Activated naive CD4-positive, alpha-beta T cell treated with anti-CD3 and anti-CD28 coated beads for 36 hours (primary cell): ENCODE measurements at regions of chr7 and their contacts with region 1.

Region 1: DNA sequence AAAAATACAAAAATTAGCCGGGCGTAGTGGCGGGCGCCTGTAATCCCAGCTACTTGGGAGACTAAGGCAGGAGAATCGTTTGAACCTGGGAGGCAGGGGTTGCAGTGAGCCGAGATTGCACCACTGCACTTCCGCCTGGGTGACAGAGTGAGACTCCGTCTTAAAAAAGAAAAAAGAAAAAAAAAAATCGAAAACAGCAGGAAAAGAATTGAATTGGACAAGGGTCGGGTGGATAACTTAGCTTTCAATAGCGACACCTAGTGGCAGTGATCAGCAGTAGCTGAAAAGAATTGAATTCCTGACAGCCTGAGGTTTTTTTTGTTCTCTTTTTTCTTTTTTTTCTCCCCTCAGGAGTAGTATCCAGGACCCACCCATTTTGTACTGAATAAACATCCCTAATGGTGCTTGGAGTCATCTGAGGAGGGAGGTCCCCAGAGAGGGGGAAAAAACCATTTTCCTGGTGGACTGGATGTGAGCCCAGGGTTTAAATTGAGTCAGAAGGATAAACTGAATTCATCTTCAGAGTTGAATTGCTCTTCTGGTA is 55.1 kb downstream of the CYCS start:
- DNase-seq: peak; percentile 57
- H3K4me3 Mint-ChIP-seq: no peak overlapping the region
- H3K27ac Mint-ChIP-seq: no peak overlapping the region
- H3K4me1 Mint-ChIP-seq: peaks cover 6% of the 10 kb centered on the region
- H3K27me3 Mint-ChIP-seq: no peaks in the 10 kb centered on the region

Region 2: DNA sequence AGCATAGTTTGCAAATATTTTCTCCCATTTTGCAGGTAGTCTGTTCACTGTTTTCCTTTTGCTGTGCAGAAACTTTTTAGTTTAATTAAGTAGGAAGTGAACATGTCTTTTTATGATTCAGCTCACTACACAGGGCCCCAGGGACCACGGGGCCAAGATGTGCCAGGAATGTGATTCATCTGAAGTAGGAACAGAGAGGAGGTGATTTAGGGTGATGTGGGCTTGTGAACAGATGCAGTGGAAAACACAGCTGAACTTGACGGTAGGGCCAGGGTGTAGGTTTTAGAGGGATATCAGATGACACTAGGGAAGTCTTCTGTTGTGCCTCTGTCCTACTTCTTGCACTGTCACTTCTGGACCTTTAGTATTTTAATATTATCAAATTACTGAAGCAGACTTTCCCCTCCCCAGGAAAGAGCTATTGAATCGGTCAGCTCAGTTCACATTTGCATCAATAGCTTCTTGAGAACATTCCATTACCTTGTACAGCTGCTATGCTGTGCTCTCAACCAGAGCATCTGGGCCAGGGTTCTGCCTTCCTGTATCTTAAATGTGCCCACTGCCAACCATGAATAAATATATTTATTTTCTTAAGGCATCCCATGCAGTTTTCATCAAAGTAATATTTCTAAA is 186.9 kb before region 1 on chr7:
- CTCF ChIA-PET with region 1: no interaction called
- intact Hi-C with region 1: loop called (anchors 5 kb)
- DNase-seq: peak; percentile 68
- H3K4me3 Mint-ChIP-seq: no peak overlapping the region
- H3K27ac Mint-ChIP-seq: no peak overlapping the region
- H3K4me1 Mint-ChIP-seq: peaks cover 75% of the 10 kb centered on the region
- H3K27me3 Mint-ChIP-seq: no peaks in the 10 kb centered on the region

Region 3: DNA sequence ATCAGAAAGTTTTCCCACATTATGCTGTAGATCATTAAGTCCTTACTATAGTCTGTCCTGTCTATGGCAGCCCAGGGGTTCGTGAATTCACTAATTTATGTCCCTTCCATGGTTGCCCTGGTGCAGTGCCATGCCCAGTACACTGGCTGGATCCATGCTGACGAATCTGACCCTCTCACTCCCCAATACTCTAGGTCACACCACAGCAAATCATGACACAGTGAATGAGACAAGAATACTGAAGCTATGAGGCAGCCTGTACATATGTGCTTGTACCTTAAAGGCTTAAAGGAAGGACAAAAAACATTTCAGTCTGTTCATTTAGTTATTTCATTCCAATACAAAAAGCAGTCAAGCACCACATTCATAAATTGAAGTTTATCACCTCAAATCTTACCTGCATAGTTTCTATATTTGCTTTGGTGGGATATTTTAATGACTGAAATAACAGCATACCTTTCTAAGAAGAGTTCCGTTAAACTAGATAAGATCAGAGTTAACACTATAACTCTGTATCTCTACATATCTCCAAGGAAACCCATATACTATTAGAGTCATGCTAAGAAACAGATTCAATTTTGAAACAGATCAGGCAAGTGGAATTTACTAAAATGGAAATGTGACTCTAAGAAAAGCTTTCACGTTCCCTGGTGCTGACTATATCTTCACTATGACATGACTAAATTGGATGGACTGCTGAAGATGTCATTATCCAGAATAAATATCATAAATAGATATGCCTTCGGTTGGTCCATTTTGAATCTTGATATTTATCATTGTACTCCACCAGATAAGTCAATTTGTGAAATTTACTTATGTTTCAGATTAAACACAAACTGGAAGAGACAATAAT is 126.7 kb before region 1 on chr7:
- CTCF ChIA-PET with region 1: no interaction called
- intact Hi-C with region 1: no loop called
- DNase-seq: no peak
- H3K4me3 Mint-ChIP-seq: no peak overlapping the region
- H3K27ac Mint-ChIP-seq: no peak overlapping the region
- H3K4me1 Mint-ChIP-seq: peaks cover 26% of the 10 kb centered on the region
- H3K27me3 Mint-ChIP-seq: no peaks in the 10 kb centered on the region

Region 4: GRCh38 chr7:24991353-24991752 is 78.6 kb before region 1 on chr7:
- CTCF ChIA-PET with region 1: interaction called, 12 read pairs
- intact Hi-C with region 1: no loop called
- DNase-seq: no peak
- H3K4me3 Mint-ChIP-seq: no peak overlapping the region
- H3K27ac Mint-ChIP-seq: no peak overlapping the region
- H3K4me1 Mint-ChIP-seq: no peaks in the 10 kb centered on the region
- H3K27me3 Mint-ChIP-seq: no peaks in the 10 kb centered on the region

Region 5: DNA sequence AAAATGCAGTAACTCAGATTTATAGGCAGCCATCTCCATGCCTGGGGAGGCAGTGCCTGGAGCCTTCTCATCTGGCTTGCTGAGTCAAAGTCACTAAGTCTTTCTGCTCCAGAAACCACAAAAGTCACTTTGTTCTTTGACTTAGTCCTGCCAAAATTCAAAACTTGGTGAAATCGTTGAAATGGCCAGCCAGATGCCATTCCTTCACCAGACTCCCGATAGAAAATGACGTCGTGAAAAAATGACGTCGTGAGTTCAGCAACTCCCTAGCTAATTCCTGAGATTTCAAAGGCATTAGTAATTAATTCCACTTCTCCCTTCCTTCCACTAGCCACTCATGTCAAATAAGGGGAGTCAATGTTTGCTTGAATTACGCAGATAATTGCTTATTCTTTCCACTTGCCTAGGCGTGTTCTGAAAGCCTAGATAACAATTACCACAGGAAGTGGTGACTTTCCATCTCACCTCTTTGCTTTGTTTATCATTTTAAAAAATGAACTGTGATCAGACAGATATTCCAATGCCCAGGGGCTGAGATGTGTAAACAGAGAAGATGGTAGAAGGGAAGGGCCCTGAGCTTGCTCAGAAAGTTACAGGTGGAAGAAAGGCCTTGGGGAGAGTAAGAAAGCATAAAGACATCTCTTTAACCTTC is 41.5 kb before region 1 on chr7:
- CTCF ChIA-PET with region 1: interaction called, 9 read pairs
- intact Hi-C with region 1: loop called (anchors 2 kb)
- DNase-seq: peak; percentile 38
- H3K4me3 Mint-ChIP-seq: no peak overlapping the region
- H3K27ac Mint-ChIP-seq: peak overlapping the region; percentile 79
- H3K4me1 Mint-ChIP-seq: peaks cover 37% of the 10 kb centered on the region
- H3K27me3 Mint-ChIP-seq: no peaks in the 10 kb centered on the region

Region 6: DNA sequence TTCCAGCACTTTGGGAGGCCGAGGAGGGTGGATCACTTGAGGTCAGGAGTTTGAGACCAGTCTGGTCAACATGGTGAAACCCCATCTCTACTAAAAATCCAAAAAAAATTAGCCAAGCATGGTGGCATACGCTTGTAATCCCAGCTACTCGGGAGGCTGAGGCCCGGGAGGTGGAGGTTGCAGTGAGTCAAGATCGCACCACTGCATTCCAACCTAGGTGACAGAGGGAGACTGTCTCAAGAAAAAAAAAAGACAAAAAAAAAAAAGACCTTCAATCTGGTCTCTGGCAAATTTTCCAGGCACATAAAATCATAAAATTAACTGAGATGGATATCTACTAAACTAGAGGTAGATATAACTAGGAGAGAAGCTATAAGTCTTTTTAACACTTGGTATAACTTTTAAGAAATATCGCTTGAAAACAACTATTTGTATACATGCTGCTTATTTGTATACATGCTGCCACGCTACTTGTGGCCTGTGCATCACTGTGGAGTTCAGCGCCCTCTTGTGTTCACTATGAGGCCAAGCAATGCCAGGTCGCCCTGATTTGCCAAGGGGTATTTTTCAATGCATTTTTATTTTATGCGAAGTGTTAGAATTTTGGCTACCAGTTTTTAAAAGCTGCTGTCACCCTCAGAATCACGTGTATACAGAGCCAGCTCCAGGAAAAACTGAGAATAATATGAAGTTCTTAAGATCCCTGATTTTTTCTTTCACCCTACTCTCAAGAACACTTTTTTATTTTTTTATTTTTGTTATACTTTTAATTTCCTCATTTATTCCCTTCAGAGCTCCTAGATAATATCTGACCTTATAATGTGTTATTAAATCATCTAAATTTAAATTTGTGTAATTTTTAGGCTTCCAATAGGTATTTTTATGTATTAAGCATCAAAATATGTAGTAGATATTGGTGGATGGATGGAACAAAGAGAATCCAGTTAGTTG is 28.4 kb after region 1 on chr7:
- CTCF ChIA-PET with region 1: interaction called, 77 read pairs
- intact Hi-C with region 1: loop called (anchors 1 kb)
- DNase-seq: peak; percentile 76
- H3K4me3 Mint-ChIP-seq: no peak overlapping the region
- H3K27ac Mint-ChIP-seq: no peak overlapping the region
- H3K4me1 Mint-ChIP-seq: peaks cover 7% of the 10 kb centered on the region
- H3K27me3 Mint-ChIP-seq: no peaks in the 10 kb centered on the region

Region 7: GRCh38 chr7:25206765-25207164 is 136.8 kb after region 1 on chr7:
- CTCF ChIA-PET with region 1: no interaction called
- intact Hi-C with region 1: no loop called
- DNase-seq: no peak
- H3K4me3 Mint-ChIP-seq: no peak overlapping the region
- H3K27ac Mint-ChIP-seq: no peak overlapping the region
- H3K4me1 Mint-ChIP-seq: no peaks in the 10 kb centered on the region
- H3K27me3 Mint-ChIP-seq: peaks cover 7% of the 10 kb centered on the region

Region 8: DNA sequence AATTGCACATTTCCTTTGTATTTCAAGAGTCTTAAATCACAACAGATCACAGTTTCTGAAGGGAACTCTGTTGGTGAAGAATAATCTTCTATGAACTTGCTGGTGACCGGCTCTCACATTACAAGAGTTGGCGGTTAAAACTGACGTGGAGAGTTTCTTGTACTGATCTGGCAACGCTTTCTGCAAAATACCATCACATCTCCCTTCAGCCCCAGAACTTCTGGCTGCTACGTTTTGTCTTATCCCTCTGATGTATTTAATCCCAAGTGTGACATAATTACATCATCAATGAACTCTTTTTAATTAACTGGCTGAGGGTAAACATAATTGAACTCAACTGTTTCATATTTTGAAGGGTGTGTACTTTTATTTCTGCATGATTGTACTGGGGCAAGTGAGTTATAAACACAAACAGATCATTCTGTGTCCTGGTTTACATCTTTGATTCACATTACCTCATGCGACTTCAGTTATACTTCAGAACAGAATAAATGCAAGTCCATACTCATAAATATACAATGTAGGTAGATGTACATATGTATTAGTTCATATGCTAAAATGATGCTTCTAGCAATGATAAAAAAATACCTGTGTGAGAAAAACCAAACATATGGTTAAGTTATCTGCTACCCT is 263.4 kb after region 1 on chr7:
- CTCF ChIA-PET with region 1: no interaction called
- intact Hi-C with region 1: no loop called
- DNase-seq: no peak
- H3K4me3 Mint-ChIP-seq: no peak overlapping the region
- H3K27ac Mint-ChIP-seq: no peak overlapping the region
- H3K4me1 Mint-ChIP-seq: no peaks in the 10 kb centered on the region
- H3K27me3 Mint-ChIP-seq: peaks cover 2% of the 10 kb centered on the region